ENCODE measurements at regions of chr5 and their contacts with region 1.

Region 1: GRCh38 chr5:16489322-16489791 is 23.8 kb upstream of the ZNF622 start:
- DNase-seq: peak; percentile 18
- H3K4me3 ChIP-seq: no peak overlapping the region
- H3K27ac ChIP-seq: no peak overlapping the region
- H3K27me3 ChIP-seq: peaks cover 16% of the 10 kb centered on the region
- CTCF ChIP-seq: peak; percentile 77

Region 2: DNA sequence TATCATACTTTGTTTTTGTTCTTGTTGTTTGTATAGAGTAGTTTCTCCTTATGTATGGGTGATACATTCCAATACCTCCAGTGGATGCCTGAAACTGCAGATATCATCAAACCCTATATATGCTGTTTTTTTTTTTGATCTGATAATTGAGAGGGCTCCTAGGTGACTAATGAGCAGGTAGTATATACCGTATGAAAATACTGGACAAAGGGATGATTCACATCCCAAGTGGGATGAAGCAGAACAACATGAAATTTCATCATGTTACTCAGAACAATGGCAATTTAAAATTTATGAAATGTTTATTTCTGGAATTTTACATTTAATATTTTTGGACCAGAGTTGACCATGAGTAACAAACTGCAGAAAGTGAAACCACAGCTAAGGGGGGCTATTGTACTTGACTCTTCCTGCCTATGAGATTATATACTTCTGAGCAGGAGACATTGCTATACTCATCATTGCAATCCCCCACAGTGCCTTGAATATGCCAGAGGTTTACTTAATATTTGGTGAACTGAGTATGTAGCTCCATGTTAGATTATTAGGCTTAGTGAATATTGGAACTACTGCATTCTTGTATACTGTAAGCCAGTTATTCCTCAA is 1248.0 kb before region 1 on chr5:
- CTCF ChIA-PET with region 1: no interaction called
- POLR2A ChIA-PET with region 1: no interaction called
- DNase-seq: no peak
- H3K4me3 ChIP-seq: no peak overlapping the region
- H3K27ac ChIP-seq: no peak overlapping the region
- H3K27me3 ChIP-seq: no peaks in the 10 kb centered on the region
- CTCF ChIP-seq: no peak

Region 3: DNA sequence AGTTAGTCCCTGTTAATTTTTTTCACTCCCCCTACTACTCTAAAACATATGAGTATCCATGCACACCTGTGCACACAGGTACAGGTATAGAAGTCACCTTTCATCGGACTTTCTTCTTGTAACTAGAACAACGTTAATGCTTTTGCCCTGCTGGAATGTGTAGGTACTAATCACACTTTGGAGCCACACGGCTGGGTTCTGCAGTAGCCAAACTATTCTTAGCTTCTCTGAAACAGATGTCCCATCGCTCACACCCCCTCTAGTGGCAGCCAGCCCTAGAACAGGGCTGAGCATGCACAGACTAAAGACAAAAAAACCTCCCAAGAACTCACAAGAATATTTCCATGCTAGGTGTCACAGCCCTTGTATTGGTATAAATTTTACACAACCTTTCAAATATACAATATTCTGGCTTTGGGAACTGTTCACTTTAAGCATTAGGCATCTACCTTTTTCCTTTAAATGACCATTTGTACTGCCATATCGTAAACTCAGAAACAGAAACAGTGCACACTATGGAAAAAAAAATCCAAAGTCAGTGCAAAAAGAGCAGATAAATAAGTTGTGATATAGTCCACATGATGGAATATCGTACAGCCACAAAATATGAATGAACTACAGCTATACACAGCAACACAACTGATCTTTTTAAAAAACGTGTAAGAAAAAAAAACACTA is 63.4 kb after region 1 on chr5:
- CTCF ChIA-PET with region 1: interaction called, 72 read pairs
- POLR2A ChIA-PET with region 1: no interaction called
- DNase-seq: no peak
- H3K4me3 ChIP-seq: no peak overlapping the region
- H3K27ac ChIP-seq: no peak overlapping the region
- H3K27me3 ChIP-seq: peaks cover 6% of the 10 kb centered on the region
- CTCF ChIP-seq: peak; percentile 93

Region 4: GRCh38 chr5:16666883-16667398 is 177.6 kb after region 1 on chr5:
- CTCF ChIA-PET with region 1: interaction called, 10 read pairs
- POLR2A ChIA-PET with region 1: no interaction called
- DNase-seq: no peak
- H3K4me3 ChIP-seq: no peak overlapping the region
- H3K27ac ChIP-seq: no peak overlapping the region
- H3K27me3 ChIP-seq: no peaks in the 10 kb centered on the region
- CTCF ChIP-seq: peak; percentile 33; the same call in 1 of the 2 replicates

Region 5: DNA sequence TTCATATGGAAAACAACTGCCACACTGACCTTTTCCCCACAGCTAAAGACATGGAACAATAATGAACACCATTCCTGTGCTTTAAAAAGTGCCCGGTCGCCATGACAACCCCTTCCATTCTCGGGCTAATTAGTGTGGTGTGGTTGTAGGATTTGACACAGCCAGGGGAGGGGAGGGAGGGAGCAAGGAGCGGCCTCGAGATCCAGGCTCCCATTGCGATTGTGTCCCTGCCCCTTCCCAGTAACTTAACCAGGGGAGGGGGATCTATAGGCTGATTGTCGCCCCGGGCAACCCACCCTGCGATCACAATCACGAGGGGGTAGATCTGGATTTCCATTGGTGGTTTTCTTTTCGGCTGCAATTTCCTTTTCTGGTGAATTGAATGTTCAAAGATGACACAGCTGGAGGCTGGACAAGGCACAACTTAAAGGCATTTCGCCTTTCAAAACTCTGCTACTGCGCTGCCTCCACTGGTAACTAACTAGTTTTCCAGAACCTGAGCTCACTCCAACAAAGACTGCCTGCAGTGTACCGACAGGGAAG is 224.1 kb after region 1 on chr5:
- CTCF ChIA-PET with region 1: no interaction called
- POLR2A ChIA-PET with region 1: interaction called, 12 read pairs
- DNase-seq: no peak
- H3K4me3 ChIP-seq: no peak overlapping the region
- H3K27ac ChIP-seq: no peak overlapping the region
- H3K27me3 ChIP-seq: no peaks in the 10 kb centered on the region
- CTCF ChIP-seq: no peak

Region 6: DNA sequence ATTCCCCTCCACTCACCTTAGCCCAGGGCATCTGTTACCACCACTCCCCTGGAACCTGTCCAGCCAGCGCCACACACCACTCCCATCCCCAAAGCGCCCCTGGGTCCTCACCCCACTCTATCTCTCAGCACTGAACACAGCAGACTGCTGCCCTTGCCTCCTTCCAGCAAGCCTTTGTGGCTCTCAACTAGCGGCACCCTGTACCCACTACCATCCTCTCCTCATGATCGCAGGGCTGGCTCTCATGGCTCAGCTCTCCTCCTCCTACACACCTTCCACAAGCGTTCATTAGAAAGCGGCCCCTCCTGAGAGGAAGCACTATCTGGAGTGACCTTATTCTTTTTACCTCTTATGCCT is 714.8 kb after region 1 on chr5:
- CTCF ChIA-PET with region 1: interaction called, 27 read pairs
- POLR2A ChIA-PET with region 1: no interaction called
- DNase-seq: no peak
- H3K4me3 ChIP-seq: no peak overlapping the region
- H3K27ac ChIP-seq: no peak overlapping the region
- H3K27me3 ChIP-seq: no peaks in the 10 kb centered on the region
- CTCF ChIP-seq: no peak

Measured in AG04450 (cell line).